Activated CD4-positive, alpha-beta T cell treated with anti-CD3 and anti-CD28 coated beads for 36 hours (primary cell): ENCODE measurements at regions of chr2 and their contacts with region 1.

Region 1: GRCh38 chr2:43898134-43898837 is 59.5 kb downstream of the ABCG8 start:
- DNase-seq: peak; percentile 30
- ATAC-seq: no peak
- H3K4me3 Mint-ChIP-seq: no peak overlapping the region
- H3K27ac Mint-ChIP-seq: peak overlapping the region; percentile 19
- H3K4me1 Mint-ChIP-seq: no peaks in the 10 kb centered on the region
- H3K27me3 Mint-ChIP-seq: no peaks in the 10 kb centered on the region

Region 2: DNA sequence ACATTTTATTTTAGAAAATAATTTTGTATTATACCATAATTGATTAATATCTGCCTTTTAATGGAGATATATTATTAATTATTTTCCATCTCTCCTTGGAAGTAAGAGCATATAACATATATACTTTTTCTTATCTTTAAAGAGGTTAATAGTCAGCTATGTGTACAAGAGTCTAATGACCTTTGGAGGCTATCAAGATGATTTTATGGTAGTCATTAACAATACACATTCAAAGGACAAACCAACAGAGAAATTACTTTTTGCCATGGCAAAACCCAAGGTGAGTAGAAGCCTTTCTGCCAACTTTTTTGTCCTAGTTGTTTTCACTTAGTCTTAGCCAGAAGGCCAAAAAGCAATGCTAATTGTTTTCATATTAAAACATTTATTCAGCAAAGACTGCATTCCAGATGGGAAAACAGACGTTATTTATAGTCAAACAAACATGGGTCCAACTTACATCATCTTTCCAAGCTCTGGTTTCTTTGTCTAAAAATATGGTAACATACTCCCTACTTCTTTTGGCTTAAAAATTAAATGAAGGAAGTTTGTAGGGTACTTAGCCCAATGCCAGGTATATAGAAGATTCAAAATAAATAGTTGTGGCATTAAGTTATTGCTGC is 134.1 kb before region 1 on chr2:
- CTCF ChIA-PET with region 1: no interaction called
- POLR2A ChIA-PET with region 1: no interaction called
- intact Hi-C with region 1: no loop called
- DNase-seq: no peak
- ATAC-seq: no peak
- H3K4me3 Mint-ChIP-seq: no peak overlapping the region
- H3K27ac Mint-ChIP-seq: no peak overlapping the region
- H3K4me1 Mint-ChIP-seq: peaks cover 15% of the 10 kb centered on the region
- H3K27me3 Mint-ChIP-seq: no peaks in the 10 kb centered on the region

Region 3: GRCh38 chr2:43939695-43940256 is 41.5 kb after region 1 on chr2:
- CTCF ChIA-PET with region 1: no interaction called
- POLR2A ChIA-PET with region 1: no interaction called
- intact Hi-C with region 1: loop called in 1 of 2 experiments (anchors 5 kb)
- DNase-seq: no peak
- ATAC-seq: no peak
- H3K4me3 Mint-ChIP-seq: no peak overlapping the region
- H3K27ac Mint-ChIP-seq: no peak overlapping the region
- H3K4me1 Mint-ChIP-seq: peaks cover 7% of the 10 kb centered on the region
- H3K27me3 Mint-ChIP-seq: no peaks in the 10 kb centered on the region

Region 4: GRCh38 chr2:44136186-44136585 is 237.9 kb after region 1 on chr2:
- CTCF ChIA-PET with region 1: no interaction called
- POLR2A ChIA-PET with region 1: no interaction called
- intact Hi-C with region 1: no loop called
- DNase-seq: no peak
- ATAC-seq: no peak
- H3K4me3 Mint-ChIP-seq: no peak overlapping the region
- H3K27ac Mint-ChIP-seq: no peak overlapping the region
- H3K4me1 Mint-ChIP-seq: peaks cover 4% of the 10 kb centered on the region
- H3K27me3 Mint-ChIP-seq: peaks cover 5% of the 10 kb centered on the region